AG04450 (cell line): ENCODE measurements at regions of chr22 and their contacts with region 1.

Region 1: GRCh38 chr22:30386960-30387827 is at the start of gene RNF215:
- DNase-seq: peak; percentile 18
- H3K4me3 ChIP-seq: peak within 1 kb of the TSS; percentile 72
- H3K27ac ChIP-seq: peak within 1 kb of the TSS; percentile 21
- H3K27me3 ChIP-seq: no peaks in the 10 kb centered on the region
- CTCF ChIP-seq: peak; percentile 75
- polyA plus RNA-seq, gene RNF215: 11.4 and 12.1 TPM in 2 replicates

Region 2: GRCh38 chr22:29964776-29965175 is 422.4 kb before region 1 on chr22:
- CTCF ChIA-PET with region 1: no interaction called
- POLR2A ChIA-PET with region 1: no interaction called
- DNase-seq: no peak
- H3K4me3 ChIP-seq: no peak overlapping the region
- H3K27ac ChIP-seq: no peak overlapping the region
- H3K27me3 ChIP-seq: no peaks in the 10 kb centered on the region
- CTCF ChIP-seq: no peak

Region 3: DNA sequence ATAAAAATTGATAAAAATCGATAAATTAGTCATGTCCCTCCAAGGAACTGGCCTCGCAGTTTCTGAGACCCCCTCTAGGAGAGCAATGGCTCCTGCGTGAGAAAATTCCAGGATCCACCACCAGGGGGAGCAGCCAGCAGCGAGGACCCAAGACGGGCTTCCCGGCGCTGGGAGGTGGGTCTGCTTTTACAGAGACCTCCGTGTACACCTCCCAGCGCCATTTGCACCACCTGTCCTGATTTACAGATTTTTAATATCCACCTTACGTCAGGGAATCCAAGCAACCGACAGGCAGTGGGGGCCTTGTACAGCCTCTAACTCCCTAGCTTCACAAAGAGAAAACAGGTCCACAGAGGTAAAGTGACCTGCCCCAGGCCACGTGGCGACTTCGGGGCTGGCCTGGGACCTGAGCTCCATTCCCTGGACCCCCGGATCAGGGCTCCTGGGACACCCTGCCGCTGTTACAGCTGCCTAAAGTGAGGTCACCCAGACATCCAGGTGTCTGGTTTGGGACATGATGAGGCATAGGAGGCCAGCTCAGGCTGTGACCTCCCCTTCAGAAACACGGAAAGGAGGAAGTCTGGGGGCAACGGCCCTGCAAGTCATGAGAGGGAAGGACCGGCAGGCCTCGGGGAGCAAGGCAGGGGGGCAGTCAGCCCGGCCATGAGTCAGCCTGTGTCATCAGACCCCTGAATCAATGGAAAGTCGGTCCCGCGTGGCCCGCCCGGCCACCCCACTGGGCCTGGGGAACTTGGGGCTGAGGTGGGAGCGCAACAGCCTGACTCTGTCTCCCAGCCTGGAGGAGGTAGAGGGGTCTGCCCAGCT is 124.1 kb before region 1 on chr22:
- CTCF ChIA-PET with region 1: interaction called, 19 read pairs
- POLR2A ChIA-PET with region 1: no interaction called
- DNase-seq: no peak
- H3K4me3 ChIP-seq: peak overlapping the region; percentile 32
- H3K27ac ChIP-seq: no peak overlapping the region
- H3K27me3 ChIP-seq: no peaks in the 10 kb centered on the region
- CTCF ChIP-seq: peak; percentile 97

Region 4: GRCh38 chr22:30485362-30485988 is 98.3 kb after region 1 on chr22:
- CTCF ChIA-PET with region 1: interaction called, 39 read pairs
- POLR2A ChIA-PET with region 1: no interaction called
- DNase-seq: peak; percentile 8
- H3K4me3 ChIP-seq: no peak overlapping the region
- H3K27ac ChIP-seq: no peak overlapping the region
- H3K27me3 ChIP-seq: peaks cover 6% of the 10 kb centered on the region
- CTCF ChIP-seq: peak; percentile 86

Region 5: GRCh38 chr22:30497466-30498150 is 110.4 kb after region 1 on chr22:
- CTCF ChIA-PET with region 1: no interaction called
- POLR2A ChIA-PET with region 1: no interaction called
- DNase-seq: no peak
- H3K4me3 ChIP-seq: no peak overlapping the region
- H3K27ac ChIP-seq: no peak overlapping the region
- H3K27me3 ChIP-seq: peaks cover 17% of the 10 kb centered on the region
- CTCF ChIP-seq: no peak